ENCODE measurements at regions of chr6 and their contacts with region 1.

Region 1: DNA sequence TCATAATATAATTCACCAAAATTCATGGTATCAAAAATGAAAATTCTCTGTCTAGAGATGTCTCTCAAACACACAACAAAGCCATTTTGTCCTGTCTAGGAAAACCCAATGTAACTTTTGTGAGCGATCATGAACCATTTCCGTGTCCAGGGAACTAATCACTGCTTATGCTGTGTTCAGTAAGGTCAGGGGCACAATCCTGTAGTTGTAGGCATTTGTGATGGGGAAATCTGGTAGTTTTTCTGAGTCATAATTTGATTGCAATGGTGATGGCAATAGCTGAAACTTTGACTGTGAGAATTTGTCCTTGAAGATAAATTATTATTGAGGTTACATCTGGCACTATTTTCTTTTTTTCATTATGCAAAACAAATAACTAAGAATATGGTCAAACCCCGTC is 21.0 kb upstream of the GCLC start:
- DNase-seq: no peak
- H3K4me3 ChIP-seq: no peak overlapping the region
- H3K4me3 Mint-ChIP-seq: no peak overlapping the region
- H3K27ac Mint-ChIP-seq: no peak overlapping the region
- H3K4me1 ChIP-seq: 0 out of 2 replicates have a peak, but pooled peaks cover 3% of the 10 kb centered on the region
- H3K4me1 Mint-ChIP-seq: no peaks in the 10 kb centered on the region
- H3K27me3 ChIP-seq: no peaks in the 10 kb centered on the region
- H3K27me3 Mint-ChIP-seq: no peaks in the 10 kb centered on the region
- CTCF ChIP-seq: no peak

Region 2: GRCh38 chr6:52790861-52791260 is 775.0 kb before region 1 on chr6:
- CTCF ChIA-PET with region 1: no interaction called
- POLR2A ChIA-PET with region 1: no interaction called
- intact Hi-C with region 1: loop called (anchors 10 kb)
- DNase-seq: no peak
- H3K4me3 ChIP-seq: no peak overlapping the region
- H3K4me3 Mint-ChIP-seq: no peak overlapping the region
- H3K27ac Mint-ChIP-seq: no peak overlapping the region
- H3K4me1 ChIP-seq: peaks cover 13% of the 10 kb centered on the region
- H3K4me1 Mint-ChIP-seq: peaks cover 25% of the 10 kb centered on the region
- H3K27me3 ChIP-seq: no peaks in the 10 kb centered on the region
- H3K27me3 Mint-ChIP-seq: no peaks in the 10 kb centered on the region
- CTCF ChIP-seq: no peak